GM12878 (cell line): ENCODE measurements at regions of chr15 and their contacts with region 1.

Region 1: DNA sequence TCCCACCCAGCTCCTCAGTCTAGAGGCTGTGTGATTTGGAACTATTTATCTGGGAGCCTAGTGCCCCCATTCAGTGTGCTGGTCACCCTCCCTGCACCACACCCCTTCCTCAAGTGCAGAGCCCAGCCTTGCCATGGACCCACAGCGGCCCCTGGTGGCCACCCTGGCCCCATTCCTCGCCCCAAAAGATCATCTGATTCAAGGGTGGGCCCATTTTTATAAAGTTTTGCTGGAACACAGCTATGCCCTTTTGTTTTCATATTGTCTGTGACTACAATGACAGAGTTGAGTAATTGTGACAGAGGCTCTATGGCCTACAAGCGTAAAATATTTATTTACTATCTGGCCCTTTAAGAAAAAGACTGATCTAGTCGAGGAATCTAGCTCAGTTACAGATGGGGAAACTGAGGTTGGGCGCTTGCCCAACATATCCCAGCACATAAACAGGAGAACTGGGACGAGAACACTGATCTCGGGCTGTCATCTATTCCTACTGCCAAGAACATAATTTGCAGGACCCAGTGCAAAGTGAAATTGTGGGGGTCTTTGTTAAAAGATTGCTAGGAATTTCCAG is 1.8 kb downstream of the FES start:
- DNase-seq: no peak
- ATAC-seq: peak; percentile 83
- H3K4me3 ChIP-seq: no peak overlapping the region; the same call in 1 of the 2 replicates
- H3K27ac ChIP-seq: peak overlapping the region; percentile 2; the same call in 1 of the 2 replicates
- H3K4me1 ChIP-seq: peaks cover 19% of the 10 kb centered on the region
- H3K27me3 ChIP-seq: no peaks in the 10 kb centered on the region
- CTCF ChIP-seq: peak; percentile 96 to 98 (median 97)
- EP300 ChIP-seq: no peak
- POLR2A ChIP-seq: no peak
- RAD21 ChIP-seq: peak; percentile 99

Region 2: GRCh38 chr15:90291679-90292356 is 594.3 kb before region 1 on chr15:
- CTCF ChIA-PET with region 1: interaction called, 11 read pairs
- POLR2A ChIA-PET with region 1: no interaction called
- RAD21 ChIA-PET with region 1: interaction called, 6 read pairs
- SMC1A ChIA-PET with region 1: no interaction called
- in situ Hi-C with region 1: no loop called
- intact Hi-C with region 1: no loop called
- DNase-seq: no peak
- ATAC-seq: peak; percentile 69
- H3K4me3 ChIP-seq: no peak overlapping the region
- H3K27ac ChIP-seq: no peak overlapping the region
- H3K4me1 ChIP-seq: no peaks in the 10 kb centered on the region
- H3K27me3 ChIP-seq: no peaks in the 10 kb centered on the region
- CTCF ChIP-seq: no peak
- EP300 ChIP-seq: no peak
- POLR2A ChIP-seq: no peak
- RAD21 ChIP-seq: no peak

Region 3: DNA sequence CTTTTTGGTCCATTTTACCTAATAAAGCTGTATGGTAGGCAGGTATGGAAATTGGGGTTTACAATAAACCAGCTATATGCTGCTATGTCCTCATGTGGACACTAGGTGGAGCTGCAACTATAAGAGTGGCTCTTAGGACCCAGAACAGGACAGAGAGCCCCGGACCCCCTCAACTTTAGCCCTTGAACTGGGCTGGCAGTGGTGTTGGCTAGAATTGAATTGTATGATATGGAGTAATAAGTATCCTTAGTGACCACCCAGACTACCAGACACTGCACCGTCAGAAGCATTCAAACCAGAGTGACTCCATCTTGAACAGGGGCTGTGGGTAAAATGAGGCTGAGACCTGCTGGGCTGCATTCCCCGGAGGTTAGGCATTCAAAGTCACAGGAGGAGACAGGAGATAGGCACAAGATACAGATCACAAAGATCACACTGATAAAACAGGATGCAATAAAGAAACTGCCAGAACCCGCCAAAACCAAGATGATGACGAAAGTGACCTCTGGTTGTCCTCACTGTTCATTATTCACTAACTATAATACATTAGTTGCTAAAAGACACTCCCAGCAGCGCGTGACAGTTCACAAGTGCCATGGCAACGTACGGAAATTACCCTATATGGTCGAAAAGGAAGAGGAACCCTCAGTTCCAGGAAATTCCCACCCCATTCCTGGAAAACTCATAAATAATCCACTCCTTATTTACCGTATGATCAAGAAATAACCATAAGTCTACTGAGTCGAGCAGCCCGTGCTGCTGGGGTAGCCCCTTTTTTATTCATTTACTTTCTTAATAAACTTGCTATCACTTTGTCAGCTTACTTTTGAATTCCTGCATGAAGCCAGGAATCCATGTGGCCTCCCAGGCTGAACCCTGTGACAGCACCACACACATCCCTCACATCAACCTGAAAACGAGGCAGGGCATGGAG is 237.7 kb before region 1 on chr15:
- CTCF ChIA-PET with region 1: interaction called, 69 read pairs
- POLR2A ChIA-PET with region 1: interaction called, 6 read pairs
- RAD21 ChIA-PET with region 1: interaction called, 57 read pairs
- SMC1A ChIA-PET with region 1: interaction called, 49 read pairs
- in situ Hi-C with region 1: loop called (anchors 5 kb)
- intact Hi-C with region 1: no loop called
- DNase-seq: no peak
- ATAC-seq: peak; percentile 84
- H3K4me3 ChIP-seq: no peak overlapping the region
- H3K27ac ChIP-seq: peak overlapping the region; percentile 89
- H3K4me1 ChIP-seq: peaks cover 14% of the 10 kb centered on the region
- H3K27me3 ChIP-seq: no peaks in the 10 kb centered on the region
- CTCF ChIP-seq: peak; percentile 79 to 88 (median 84)
- EP300 ChIP-seq: 0 out of 4 replicates have a peak, but pooled peaks of 1 of the 2 experiments have one; percentile 20
- POLR2A ChIP-seq: no peak
- RAD21 ChIP-seq: peak; percentile 98

Region 4: GRCh38 chr15:90691982-90692773 is 193.9 kb before region 1 on chr15:
- CTCF ChIA-PET with region 1: interaction called, 45 read pairs
- POLR2A ChIA-PET with region 1: no interaction called
- RAD21 ChIA-PET with region 1: interaction called, 23 read pairs
- SMC1A ChIA-PET with region 1: interaction called, 15 read pairs
- in situ Hi-C with region 1: no loop called
- intact Hi-C with region 1: loop called (anchors 1 kb)
- DNase-seq: peak; percentile 84
- ATAC-seq: peak; percentile 73
- H3K4me3 ChIP-seq: no peak overlapping the region
- H3K27ac ChIP-seq: peak overlapping the region; percentile 99
- H3K4me1 ChIP-seq: peaks cover 41% of the 10 kb centered on the region
- H3K27me3 ChIP-seq: no peaks in the 10 kb centered on the region
- CTCF ChIP-seq: no peak
- EP300 ChIP-seq: no peak
- POLR2A ChIP-seq: peak; percentile 68
- RAD21 ChIP-seq: peak; percentile 19; the same call in 1 of the 2 replicates

Region 5: DNA sequence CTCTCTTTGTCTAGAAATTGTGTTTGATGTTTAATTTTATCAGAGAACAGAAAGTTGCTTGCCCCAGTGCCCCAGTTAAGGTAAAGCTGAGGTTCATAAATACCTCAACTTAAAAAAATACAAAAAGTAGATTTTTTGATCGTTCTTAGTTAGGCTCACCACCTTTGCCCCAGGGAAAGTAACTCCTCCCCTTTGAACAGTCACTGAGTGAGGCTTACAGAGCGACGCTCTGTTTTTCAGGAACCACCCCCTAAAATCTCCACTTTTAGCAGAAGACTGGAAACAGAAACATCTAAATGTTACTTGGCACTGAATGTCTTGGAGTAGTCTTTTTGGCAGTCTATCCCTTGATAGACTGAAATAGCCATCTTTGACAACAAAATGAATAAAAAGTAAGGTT is 144.0 kb before region 1 on chr15:
- CTCF ChIA-PET with region 1: interaction called, 17 read pairs
- POLR2A ChIA-PET with region 1: no interaction called
- RAD21 ChIA-PET with region 1: no interaction called
- SMC1A ChIA-PET with region 1: interaction called, 4 read pairs
- in situ Hi-C with region 1: no loop called
- intact Hi-C with region 1: no loop called
- DNase-seq: no peak
- ATAC-seq: no peak
- H3K4me3 ChIP-seq: no peak overlapping the region
- H3K27ac ChIP-seq: no peak overlapping the region
- H3K4me1 ChIP-seq: no peaks in the 10 kb centered on the region; the same call in 1 of the 2 replicates
- H3K27me3 ChIP-seq: no peaks in the 10 kb centered on the region
- CTCF ChIP-seq: no peak
- EP300 ChIP-seq: no peak
- POLR2A ChIP-seq: no peak
- RAD21 ChIP-seq: no peak

Region 6: DNA sequence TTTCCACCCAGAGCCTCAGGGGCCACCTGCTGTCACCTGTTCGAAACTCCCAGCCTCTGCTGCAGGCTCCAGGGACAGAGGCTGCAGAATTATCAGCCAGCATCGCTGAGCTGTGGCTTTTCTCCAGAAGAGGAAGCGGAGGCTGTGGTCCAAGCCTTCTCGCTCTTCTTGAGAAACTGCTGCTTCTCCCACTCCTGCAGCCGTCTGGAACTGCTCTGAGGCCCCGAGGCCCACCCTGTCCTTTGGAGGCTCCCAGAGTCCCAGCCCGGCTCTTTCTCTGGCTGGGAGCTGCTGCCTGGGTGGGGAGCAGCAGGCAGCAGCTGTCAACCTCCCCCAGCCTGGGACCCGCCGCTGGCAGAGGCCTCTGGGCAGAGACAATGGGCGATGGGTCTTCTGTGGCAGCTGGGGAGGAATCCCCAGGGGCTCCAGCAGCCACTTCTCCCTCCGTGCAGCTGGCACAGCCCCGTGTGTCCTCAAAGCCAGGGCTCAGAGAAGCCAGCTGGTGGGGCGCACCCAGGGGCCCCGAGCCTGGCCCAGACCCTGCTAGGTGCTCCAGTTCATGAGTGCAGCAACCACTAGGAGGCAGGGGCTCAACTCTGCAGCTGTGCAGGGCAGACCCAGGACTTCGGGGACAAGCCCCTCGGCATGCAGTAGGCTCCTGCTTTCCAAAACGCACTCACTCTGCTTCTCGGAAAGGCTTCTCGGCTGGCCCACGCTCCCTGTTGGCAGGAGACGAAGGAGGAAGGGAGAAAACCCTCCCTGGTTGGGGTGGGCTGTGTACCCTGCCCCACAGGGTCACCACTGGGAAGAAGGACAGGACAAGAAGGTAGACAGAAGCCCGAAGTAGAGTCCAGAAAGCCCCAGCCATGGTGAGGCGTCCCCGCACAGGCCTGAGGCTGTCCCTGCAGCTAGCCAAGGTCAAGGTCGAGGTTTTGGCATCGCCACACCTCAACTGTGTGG is 67.6 kb before region 1 on chr15:
- CTCF ChIA-PET with region 1: interaction called, 18 read pairs
- POLR2A ChIA-PET with region 1: no interaction called
- RAD21 ChIA-PET with region 1: interaction called, 13 read pairs
- SMC1A ChIA-PET with region 1: interaction called, 15 read pairs
- in situ Hi-C with region 1: no loop called
- intact Hi-C with region 1: loop called (anchors 5 kb)
- DNase-seq: no peak
- ATAC-seq: peak; percentile 71
- H3K4me3 ChIP-seq: no peak overlapping the region
- H3K27ac ChIP-seq: no peak overlapping the region
- H3K4me1 ChIP-seq: peaks cover 25% of the 10 kb centered on the region
- H3K27me3 ChIP-seq: no peaks in the 10 kb centered on the region
- CTCF ChIP-seq: peak; percentile 21 to 38 (median 33); a peak in 3 of 6 replicates
- EP300 ChIP-seq: no peak
- POLR2A ChIP-seq: no peak
- RAD21 ChIP-seq: peak; percentile 63

Region 7: DNA sequence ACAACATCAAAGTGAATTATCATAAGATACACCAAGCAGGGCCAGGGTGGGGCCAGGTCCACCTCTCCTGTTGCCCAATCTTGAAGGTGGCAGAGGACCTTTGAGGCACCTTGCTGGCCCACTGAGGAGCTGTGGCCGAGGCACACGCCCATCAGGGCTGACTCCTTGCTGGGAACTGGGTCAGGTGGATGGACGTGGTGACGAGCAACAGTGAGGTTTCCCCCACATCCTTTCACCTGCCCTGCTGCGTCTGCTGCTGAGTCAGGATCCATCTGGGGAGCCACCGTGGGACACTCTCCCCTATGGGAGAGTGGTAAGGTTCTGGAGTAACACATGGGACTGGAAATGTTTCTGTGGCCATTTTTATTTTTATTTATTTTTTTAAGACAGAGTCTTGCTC is 35.0 kb before region 1 on chr15:
- CTCF ChIA-PET with region 1: interaction called, 6 read pairs
- POLR2A ChIA-PET with region 1: no interaction called
- RAD21 ChIA-PET with region 1: interaction called, 3 read pairs
- SMC1A ChIA-PET with region 1: interaction called, 11 read pairs
- in situ Hi-C with region 1: no loop called
- intact Hi-C with region 1: no loop called
- DNase-seq: no peak
- ATAC-seq: no peak
- H3K4me3 ChIP-seq: no peak overlapping the region
- H3K27ac ChIP-seq: peak overlapping the region; percentile 32; the same call in 1 of the 2 replicates
- H3K4me1 ChIP-seq: peaks cover 44% of the 10 kb centered on the region
- H3K27me3 ChIP-seq: no peaks in the 10 kb centered on the region
- CTCF ChIP-seq: no peak
- EP300 ChIP-seq: no peak
- POLR2A ChIP-seq: no peak
- RAD21 ChIP-seq: no peak